ENCODE measurements at regions of chr1 and their contacts with region 1.

Region 1: GRCh38 chr1:226687426-226687825 is 51.7 kb downstream of the ITPKB start:
- DNase-seq: peak; percentile 52 to 78
- ATAC-seq: peak; percentile 66 to 78 (median 78)
- H3K4me3 ChIP-seq: no peak overlapping the region
- H3K4me3 Mint-ChIP-seq: no peak overlapping the region
- H3K27ac ChIP-seq: peak overlapping the region; percentile 26
- H3K27ac Mint-ChIP-seq: peak overlapping the region; percentile 97 to 99
- H3K4me1 ChIP-seq: peaks cover 79% of the 10 kb centered on the region
- H3K4me1 Mint-ChIP-seq: peaks cover 94 to 98% of the 10 kb centered on the region in 2 donors
- H3K27me3 ChIP-seq: no peaks in the 10 kb centered on the region
- H3K27me3 Mint-ChIP-seq: no peaks in the 10 kb centered on the region
- CTCF ChIP-seq: peak; percentile 65

Region 2: DNA sequence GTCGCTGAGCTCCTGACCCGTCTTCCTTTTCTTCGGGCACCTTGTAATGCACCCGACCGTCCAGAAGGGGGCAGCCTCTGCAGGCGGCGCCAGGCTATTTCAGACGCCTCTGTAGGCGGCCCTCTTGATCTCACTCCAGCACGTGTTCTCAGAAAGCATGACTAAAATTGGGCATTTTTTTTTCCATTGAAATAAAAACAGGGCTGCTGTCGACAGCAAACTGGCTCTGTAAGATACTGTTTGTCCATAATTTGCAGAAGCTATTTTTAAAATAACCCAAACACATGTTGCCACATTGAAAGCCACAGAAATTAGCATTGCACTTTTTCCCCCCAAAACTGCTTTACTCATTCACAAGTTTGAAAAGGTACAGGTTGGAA is 60.9 kb before region 1 on chr1:
- intact Hi-C with region 1: loop called (anchors 2 kb)
- DNase-seq: peak; percentile 75 to 87
- ATAC-seq: peak; percentile 95 to 100 (median 97)
- H3K4me3 ChIP-seq: peak overlapping the region; percentile 28
- H3K4me3 Mint-ChIP-seq: peak overlapping the region; percentile 69
- H3K27ac ChIP-seq: no peak overlapping the region
- H3K27ac Mint-ChIP-seq: peak overlapping the region; percentile 38 to 51
- H3K4me1 ChIP-seq: peaks cover 9% of the 10 kb centered on the region
- H3K4me1 Mint-ChIP-seq: peaks cover 16 to 19% of the 10 kb centered on the region in 2 donors
- H3K27me3 ChIP-seq: no peaks in the 10 kb centered on the region
- H3K27me3 Mint-ChIP-seq: peaks cover 0 to 3% of the 10 kb centered on the region in 2 donors
- CTCF ChIP-seq: peak; percentile 97

Region 3: DNA sequence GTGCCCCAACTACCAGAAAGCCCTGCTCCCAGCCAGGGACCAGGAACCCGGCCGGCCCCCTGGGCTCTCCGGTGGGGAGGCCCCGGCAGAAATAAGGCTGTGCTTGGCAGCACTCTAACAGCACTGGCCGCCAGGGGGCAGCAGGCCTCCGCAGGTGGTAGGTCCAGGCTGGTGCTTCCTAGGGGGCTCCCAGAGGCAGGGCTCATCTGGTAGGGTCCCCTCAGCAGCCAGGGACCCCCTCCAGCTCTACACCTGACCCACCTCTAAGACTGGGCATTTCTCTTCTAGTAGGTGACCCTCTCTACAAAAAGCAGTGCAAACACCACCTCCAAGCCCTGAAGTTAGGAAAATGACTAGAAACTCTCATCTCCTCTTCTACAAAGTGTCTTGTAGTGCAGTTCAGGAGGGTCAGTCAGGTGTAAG is 53.2 kb before region 1 on chr1:
- intact Hi-C with region 1: loop called (anchors 1 kb)
- DNase-seq: peak; percentile 82 to 91
- ATAC-seq: peak; percentile 88 to 98 (median 92)
- H3K4me3 ChIP-seq: no peak overlapping the region
- H3K4me3 Mint-ChIP-seq: no peak overlapping the region
- H3K27ac ChIP-seq: peak overlapping the region; percentile 47
- H3K27ac Mint-ChIP-seq: peak overlapping the region; percentile 71 to 74
- H3K4me1 ChIP-seq: peaks cover 42% of the 10 kb centered on the region
- H3K4me1 Mint-ChIP-seq: peaks cover 20 to 26% of the 10 kb centered on the region in 2 donors
- H3K27me3 ChIP-seq: no peaks in the 10 kb centered on the region
- H3K27me3 Mint-ChIP-seq: no peaks in the 10 kb centered on the region
- CTCF ChIP-seq: peak; percentile 94

Region 4: GRCh38 chr1:226649780-226650179 is 37.6 kb before region 1 on chr1:
- intact Hi-C with region 1: loop called (anchors 5 kb)
- DNase-seq: peak in 1 of 2 donors; percentile 73
- ATAC-seq: no peak
- H3K4me3 ChIP-seq: no peak overlapping the region
- H3K4me3 Mint-ChIP-seq: no peak overlapping the region
- H3K27ac ChIP-seq: no peak overlapping the region
- H3K27ac Mint-ChIP-seq: no peak overlapping the region
- H3K4me1 ChIP-seq: peaks cover 30% of the 10 kb centered on the region
- H3K4me1 Mint-ChIP-seq: peaks cover 24 to 31% of the 10 kb centered on the region in 2 donors
- H3K27me3 ChIP-seq: no peaks in the 10 kb centered on the region
- H3K27me3 Mint-ChIP-seq: no peaks in the 10 kb centered on the region
- CTCF ChIP-seq: peak; percentile 17

Region 5: DNA sequence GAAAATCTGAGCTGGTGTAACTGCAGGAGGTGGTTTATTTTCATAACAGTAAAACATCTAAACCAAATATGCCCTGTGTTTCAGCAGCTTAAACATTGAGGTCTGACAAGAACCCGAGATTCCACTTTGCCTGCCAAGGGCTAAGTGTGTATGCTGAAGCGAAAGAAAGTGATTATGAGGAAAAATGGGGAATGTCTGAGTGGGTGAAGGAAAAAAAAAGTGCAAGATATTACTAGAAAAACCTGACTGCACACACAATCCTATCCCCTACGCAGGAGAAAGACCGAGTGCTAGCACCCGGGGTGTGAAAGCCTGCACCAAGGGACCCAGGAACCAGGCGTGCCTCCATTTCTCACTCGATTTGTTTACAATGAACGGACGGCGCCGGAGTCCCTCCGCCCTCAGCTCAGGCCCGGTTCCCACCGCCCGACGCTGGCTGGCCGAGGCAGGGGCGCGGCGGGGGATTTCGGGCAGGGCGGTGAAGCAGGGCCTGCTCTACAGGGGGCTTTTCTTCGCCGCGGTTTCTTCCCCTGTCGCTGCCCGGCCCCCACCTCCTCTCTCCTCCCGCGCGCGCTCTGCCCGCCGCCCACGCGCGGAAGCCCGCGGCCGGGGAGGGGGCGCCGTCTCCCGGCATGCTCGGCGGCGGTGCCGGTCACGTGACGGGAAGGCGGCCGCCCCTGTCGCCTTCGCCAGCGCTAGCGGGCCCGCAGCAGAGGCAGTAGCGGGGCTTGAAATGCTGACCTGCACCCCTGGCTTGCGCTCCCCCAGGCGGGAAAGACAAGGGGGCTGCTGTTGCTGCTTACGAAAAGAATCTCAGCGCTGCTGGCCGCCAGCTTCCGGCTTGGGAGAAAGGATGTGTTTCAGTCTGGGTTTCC is 15.8 kb after region 1 on chr1:
- intact Hi-C with region 1: no loop called
- DNase-seq: peak; percentile 87 to 92
- ATAC-seq: peak; percentile 87 to 96 (median 90)
- H3K4me3 ChIP-seq: peak overlapping the region; percentile 47
- H3K4me3 Mint-ChIP-seq: peak overlapping the region; percentile 83
- H3K27ac ChIP-seq: peak overlapping the region; percentile 85
- H3K27ac Mint-ChIP-seq: peak overlapping the region; percentile 95 to 99
- H3K4me1 ChIP-seq: peaks cover 40% of the 10 kb centered on the region
- H3K4me1 Mint-ChIP-seq: peaks cover 59 to 66% of the 10 kb centered on the region in 2 donors
- H3K27me3 ChIP-seq: no peaks in the 10 kb centered on the region
- H3K27me3 Mint-ChIP-seq: no peaks in the 10 kb centered on the region
- CTCF ChIP-seq: no peak

Region 6: DNA sequence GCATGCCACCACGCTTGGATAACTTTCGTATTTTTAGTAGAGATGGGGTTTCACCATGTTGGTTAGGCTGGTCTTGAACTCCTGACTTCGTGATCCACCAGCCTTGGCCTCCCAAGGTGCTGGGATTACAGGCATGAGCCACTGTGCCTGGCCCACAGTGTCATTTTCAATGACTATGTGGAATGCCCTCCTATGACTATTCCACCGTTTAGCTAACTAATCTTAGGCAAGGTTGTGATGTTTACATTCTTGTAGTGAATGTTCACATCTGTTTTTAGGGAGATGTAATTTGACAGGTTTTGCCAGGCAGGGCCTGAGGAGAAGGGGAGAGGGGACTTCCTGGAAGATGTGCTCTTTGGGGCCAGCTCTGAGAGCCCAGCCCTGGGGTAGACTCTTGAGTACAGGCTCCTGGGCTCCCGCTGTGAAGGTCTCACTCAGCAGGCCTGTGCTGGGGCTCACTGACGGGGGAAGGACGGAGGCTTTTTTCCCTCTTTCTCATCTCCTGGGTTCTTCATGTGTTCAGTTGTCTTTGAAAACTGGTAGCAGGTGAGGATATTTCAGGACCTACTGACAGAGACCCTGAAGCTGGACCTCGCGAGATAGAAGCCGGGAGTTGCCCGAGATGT is 265.9 kb after region 1 on chr1:
- intact Hi-C with region 1: no loop called
- DNase-seq: no peak
- ATAC-seq: no peak
- H3K4me3 ChIP-seq: no peak overlapping the region
- H3K4me3 Mint-ChIP-seq: no peak overlapping the region
- H3K27ac ChIP-seq: no peak overlapping the region
- H3K27ac Mint-ChIP-seq: peak overlapping the region in 1 of 2 donors; percentile 38
- H3K4me1 ChIP-seq: no peaks in the 10 kb centered on the region
- H3K4me1 Mint-ChIP-seq: peaks cover 34 to 60% of the 10 kb centered on the region in 2 donors
- H3K27me3 ChIP-seq: no peaks in the 10 kb centered on the region
- H3K27me3 Mint-ChIP-seq: no peaks in the 10 kb centered on the region
- CTCF ChIP-seq: no peak